Right ventricle myocardium inferior (tissue), 1 donor: ENCODE measurements at regions of chr5 and their contacts with region 1.

Region 1: GRCh38 chr5:146203011-146203871 is at the start of gene RBM27:
- DNase-seq: peak; percentile 96
- ATAC-seq: peak; percentile 100
- total RNA-seq, gene RBM27: 13.4 TPM

Region 2: GRCh38 chr5:146185161-146185560 is 18.1 kb before region 1 on chr5:
- intact Hi-C with region 1: loop called (anchors 1 kb)
- DNase-seq: no peak
- ATAC-seq: no peak